ENCODE measurements at regions of chr2 and their contacts with region 1.

Region 1: DNA sequence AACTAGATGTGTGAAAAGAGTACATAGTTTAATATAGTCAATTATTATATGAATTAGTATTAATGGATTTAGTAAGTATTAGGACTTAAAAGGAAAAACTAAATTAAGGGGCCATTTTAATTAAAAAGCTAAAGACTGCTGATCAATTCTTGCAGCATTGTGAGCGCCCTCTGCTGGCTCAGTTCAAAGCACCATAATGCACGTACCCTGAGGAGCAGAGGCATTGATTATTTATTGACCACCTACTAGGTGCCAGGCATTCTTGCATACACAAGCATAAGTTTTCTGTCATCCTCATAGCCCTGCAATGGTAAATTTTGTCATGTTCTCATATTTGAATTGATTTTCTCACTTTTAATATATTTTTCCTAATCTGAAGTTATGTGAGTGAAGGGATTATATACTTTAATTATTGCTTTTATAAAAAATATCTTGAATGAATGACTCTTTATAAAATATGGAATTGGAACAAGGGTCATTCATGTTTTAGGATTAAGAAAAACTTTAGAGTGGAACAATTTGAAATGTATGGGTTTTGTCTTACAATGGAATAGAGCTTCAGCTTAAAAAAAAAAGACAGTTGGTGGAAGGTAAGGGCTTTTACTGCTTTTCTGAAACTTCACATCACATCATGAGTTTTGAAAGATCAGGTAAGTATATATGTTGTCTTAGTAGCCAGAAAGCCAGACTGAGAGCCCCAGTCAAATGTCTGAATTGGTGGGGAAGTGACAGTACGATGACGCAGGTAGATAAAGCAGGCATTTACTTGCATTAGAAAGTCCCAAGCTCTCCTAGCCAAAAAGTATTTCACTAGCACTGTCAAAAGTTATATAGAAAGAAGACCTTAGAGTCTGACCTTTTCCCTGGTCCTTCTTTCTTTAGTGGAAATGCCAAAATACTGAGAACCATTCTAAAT is 9.7 kb downstream of the ITGA4 start:
- DNase-seq: peak; percentile 53 to 69 (median 61)
- ATAC-seq: peak; percentile 68
- H3K4me3 ChIP-seq: no peak overlapping the region
- H3K4me3 Mint-ChIP-seq: peak overlapping the region in 9 of 10 donors; percentile 49 to 76 (median 65)
- H3K27ac ChIP-seq: peak overlapping the region; percentile 65
- H3K27ac Mint-ChIP-seq: peak overlapping the region; percentile 59 to 95 (median 87)
- H3K4me1 ChIP-seq: peaks cover 53 to 71% of the 10 kb centered on the region in 2 donors
- H3K4me1 Mint-ChIP-seq: peaks cover 55 to 92% (median 90%) of the 10 kb centered on the region in 7 donors
- H3K27me3 ChIP-seq: no peaks in the 10 kb centered on the region
- H3K27me3 Mint-ChIP-seq: no peaks in the 10 kb centered on the region

Region 2: GRCh38 chr2:181077128-181077709 is 389.7 kb before region 1 on chr2:
- CTCF ChIA-PET with region 1: interaction called, 5 read pairs
- POLR2A ChIA-PET with region 1: interaction called, 3 read pairs
- intact Hi-C with region 1: loop called (anchors 1 kb)
- DNase-seq: peak in 7 of 9 donors; percentile 49 to 76 (median 64)
- ATAC-seq: peak; percentile 90
- H3K4me3 ChIP-seq: no peak overlapping the region
- H3K4me3 Mint-ChIP-seq: no peak overlapping the region
- H3K27ac ChIP-seq: no peak overlapping the region
- H3K27ac Mint-ChIP-seq: no peak overlapping the region
- H3K4me1 ChIP-seq: no peaks in the 10 kb centered on the region
- H3K4me1 Mint-ChIP-seq: peaks cover 0 to 11% (median 0%) of the 10 kb centered on the region in 7 donors
- H3K27me3 ChIP-seq: no peaks in the 10 kb centered on the region
- H3K27me3 Mint-ChIP-seq: peaks cover 0 to 14% (median 0%) of the 10 kb centered on the region in 5 donors

Region 3: DNA sequence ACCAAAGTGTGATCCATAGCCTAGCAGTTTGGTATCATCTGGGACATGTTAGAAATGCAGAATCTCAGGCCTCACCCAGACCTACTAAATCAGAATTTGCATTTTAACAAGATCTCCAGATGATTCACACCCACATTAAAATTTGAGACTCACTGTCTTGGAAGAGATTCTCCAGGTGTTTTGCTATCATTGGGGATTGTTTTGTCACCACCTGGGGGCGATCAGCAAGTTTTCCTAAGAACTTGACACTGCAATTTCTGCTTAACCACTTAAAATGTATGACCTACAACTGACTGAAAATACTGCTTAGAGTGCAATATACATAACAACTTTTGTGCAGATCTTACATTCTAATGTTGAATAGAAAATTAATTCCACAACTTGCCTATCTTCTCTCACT is 28.7 kb before region 1 on chr2:
- CTCF ChIA-PET with region 1: interaction called, 3 read pairs
- POLR2A ChIA-PET with region 1: interaction called, 3 read pairs
- intact Hi-C with region 1: loop called in 1 of 2 experiments (anchors 1 kb)
- DNase-seq: peak in 1 of 9 donors; percentile 34
- ATAC-seq: peak; percentile 37
- H3K4me3 ChIP-seq: no peak overlapping the region
- H3K4me3 Mint-ChIP-seq: no peak overlapping the region
- H3K27ac ChIP-seq: no peak overlapping the region
- H3K27ac Mint-ChIP-seq: peak overlapping the region in 1 of 9 donors; percentile 45
- H3K4me1 ChIP-seq: no peaks in the 10 kb centered on the region
- H3K4me1 Mint-ChIP-seq: peaks cover 0 to 28% (median 15%) of the 10 kb centered on the region in 7 donors
- H3K27me3 ChIP-seq: no peaks in the 10 kb centered on the region
- H3K27me3 Mint-ChIP-seq: peaks cover 0 to 2% (median 0%) of the 10 kb centered on the region in 5 donors